CD4-positive, alpha-beta T cell (primary cell): ENCODE measurements at regions of chr5 and their contacts with region 1.

Region 1: GRCh38 chr5:87267574-87268125 is at the start of gene RASA1:
- DNase-seq: peak; percentile 43 to 89 (median 70)
- ATAC-seq: peak; percentile 61
- H3K4me3 ChIP-seq: peak within 1 kb of the TSS; percentile 72
- H3K4me3 Mint-ChIP-seq: peak within 1 kb of the TSS; percentile 93
- H3K27ac ChIP-seq: peak within 1 kb of the TSS; percentile 36 to 77
- H3K27ac Mint-ChIP-seq: peak within 1 kb of the TSS; percentile 83
- H3K4me1 ChIP-seq: peaks cover 28% of the 10 kb centered on the region
- H3K4me1 Mint-ChIP-seq: peaks cover 34% of the 10 kb centered on the region
- H3K27me3 ChIP-seq: no peaks in the 10 kb centered on the region
- H3K27me3 Mint-ChIP-seq: no peaks in the 10 kb centered on the region
- CTCF ChIP-seq: no peak
- total RNA-seq, gene RASA1: 15.1 to 15.4 TPM

Region 2: DNA sequence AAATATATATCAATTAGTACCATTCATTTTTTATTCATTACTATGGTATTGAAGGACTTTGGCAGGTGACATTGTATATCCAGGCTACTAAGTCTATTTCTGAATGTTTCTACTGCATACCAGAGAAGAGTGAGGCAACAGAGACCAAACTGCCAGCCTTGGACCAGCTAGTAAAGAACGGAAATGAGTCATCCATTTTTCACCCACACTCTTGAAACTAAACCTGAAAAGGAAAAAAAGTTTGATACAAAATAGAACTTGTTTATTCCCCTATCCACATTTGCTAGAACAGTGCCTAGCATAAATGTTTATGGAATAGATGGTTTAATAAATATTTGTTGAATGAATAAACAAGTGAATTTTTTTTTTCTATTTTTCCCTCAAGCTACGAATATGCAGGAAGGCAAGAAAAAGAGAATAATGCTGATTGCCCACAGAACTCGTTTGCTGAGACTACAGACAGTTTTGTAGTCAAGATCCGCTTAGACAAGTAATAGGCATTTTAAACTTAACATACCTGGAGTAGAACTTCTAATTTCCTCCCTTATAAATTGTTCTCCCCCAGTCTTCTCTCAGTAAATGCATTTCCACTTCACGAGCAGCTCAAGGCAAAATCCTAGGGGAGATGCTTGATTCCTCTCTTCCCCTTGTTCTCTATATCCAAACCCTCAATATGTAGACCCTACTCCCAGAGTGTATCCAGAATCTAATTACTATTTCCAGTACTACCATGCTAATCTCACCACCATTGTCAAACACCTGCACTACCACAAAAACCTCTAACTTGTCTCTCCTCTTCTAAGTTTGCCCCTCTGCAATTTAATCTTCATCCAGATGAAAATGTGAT is 146.1 kb before region 1 on chr5:
- CTCF ChIA-PET with region 1: no interaction called
- POLR2A ChIA-PET with region 1: interaction called, 3 read pairs
- intact Hi-C with region 1: loop called in 1 of 2 experiments (anchors 5 kb)
- DNase-seq: peak in 11 of 14 experiments; percentile 5 to 76 (median 23)
- ATAC-seq: peak; percentile 79
- H3K4me3 ChIP-seq: no peak overlapping the region
- H3K4me3 Mint-ChIP-seq: peak overlapping the region; percentile 55
- H3K27ac ChIP-seq: peak overlapping the region; percentile 11 to 54
- H3K27ac Mint-ChIP-seq: peak overlapping the region; percentile 60
- H3K4me1 ChIP-seq: peaks cover 22% of the 10 kb centered on the region
- H3K4me1 Mint-ChIP-seq: peaks cover 39% of the 10 kb centered on the region
- H3K27me3 ChIP-seq: no peaks in the 10 kb centered on the region
- H3K27me3 Mint-ChIP-seq: no peaks in the 10 kb centered on the region
- CTCF ChIP-seq: no peak

Region 3: DNA sequence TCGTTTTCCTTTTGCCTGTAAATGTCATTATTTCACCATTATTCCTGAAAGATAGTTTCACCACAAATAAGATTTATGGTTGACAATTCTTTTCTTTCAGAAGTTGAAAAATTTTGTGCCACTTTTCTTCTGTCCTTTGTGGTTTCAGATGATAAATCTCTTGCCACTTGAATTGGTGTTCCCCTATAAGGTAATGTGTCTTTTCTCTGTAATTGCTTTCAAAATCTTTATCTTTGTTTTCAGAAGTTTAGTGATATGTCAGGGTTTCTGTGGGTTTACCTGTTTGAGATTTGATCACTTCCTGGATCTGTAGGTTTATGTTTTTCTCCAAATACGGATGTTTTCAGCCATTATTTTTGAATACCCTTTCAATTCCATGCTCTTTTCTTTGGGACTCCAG is 14.6 kb after region 1 on chr5:
- CTCF ChIA-PET with region 1: interaction called, 5 read pairs
- POLR2A ChIA-PET with region 1: interaction called, 30 read pairs
- intact Hi-C with region 1: no loop called
- DNase-seq: peak in 3 of 14 experiments; percentile 52 to 65 (median 52)
- ATAC-seq: peak; percentile 89
- H3K4me3 ChIP-seq: peak overlapping the region; percentile 36
- H3K4me3 Mint-ChIP-seq: peak overlapping the region; percentile 89
- H3K27ac ChIP-seq: peak overlapping the region; percentile 39 to 65
- H3K27ac Mint-ChIP-seq: peak overlapping the region; percentile 95
- H3K4me1 ChIP-seq: peaks cover 8% of the 10 kb centered on the region
- H3K4me1 Mint-ChIP-seq: peaks cover 64% of the 10 kb centered on the region
- H3K27me3 ChIP-seq: no peaks in the 10 kb centered on the region
- H3K27me3 Mint-ChIP-seq: no peaks in the 10 kb centered on the region
- CTCF ChIP-seq: no peak

Region 4: DNA sequence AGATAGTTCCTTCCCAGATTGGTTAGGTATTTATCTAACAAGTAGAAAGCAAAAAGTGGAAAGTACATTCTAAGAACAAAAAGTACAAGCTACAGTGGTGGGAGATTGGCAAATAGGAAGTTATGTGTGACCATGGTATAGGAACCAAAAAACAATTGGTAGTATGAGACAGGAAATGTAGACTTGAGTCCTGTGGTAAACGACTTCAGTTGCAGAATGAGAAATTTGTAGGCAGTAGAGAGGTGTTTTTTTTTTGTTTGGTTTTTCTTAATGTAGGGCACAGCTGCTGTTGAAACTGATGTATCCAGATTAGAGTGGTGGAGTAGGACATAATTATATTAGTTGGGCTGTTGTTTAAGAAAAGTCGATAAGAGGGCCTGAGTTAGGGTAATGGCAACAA is 73.1 kb after region 1 on chr5:
- CTCF ChIA-PET with region 1: interaction called, 3 read pairs
- POLR2A ChIA-PET with region 1: interaction called, 8 read pairs
- intact Hi-C with region 1: loop called (anchors 2 to 5 kb)
- DNase-seq: peak in 3 of 14 experiments; percentile 59 to 78 (median 61)
- ATAC-seq: peak; percentile 90
- H3K4me3 ChIP-seq: peak overlapping the region; percentile 28
- H3K4me3 Mint-ChIP-seq: peak overlapping the region; percentile 79
- H3K27ac ChIP-seq: peak overlapping the region in 1 of 2 donors; percentile 51
- H3K27ac Mint-ChIP-seq: peak overlapping the region; percentile 84
- H3K4me1 ChIP-seq: no peaks in the 10 kb centered on the region
- H3K4me1 Mint-ChIP-seq: peaks cover 33% of the 10 kb centered on the region
- H3K27me3 ChIP-seq: no peaks in the 10 kb centered on the region
- H3K27me3 Mint-ChIP-seq: no peaks in the 10 kb centered on the region
- CTCF ChIP-seq: no peak

Region 5: DNA sequence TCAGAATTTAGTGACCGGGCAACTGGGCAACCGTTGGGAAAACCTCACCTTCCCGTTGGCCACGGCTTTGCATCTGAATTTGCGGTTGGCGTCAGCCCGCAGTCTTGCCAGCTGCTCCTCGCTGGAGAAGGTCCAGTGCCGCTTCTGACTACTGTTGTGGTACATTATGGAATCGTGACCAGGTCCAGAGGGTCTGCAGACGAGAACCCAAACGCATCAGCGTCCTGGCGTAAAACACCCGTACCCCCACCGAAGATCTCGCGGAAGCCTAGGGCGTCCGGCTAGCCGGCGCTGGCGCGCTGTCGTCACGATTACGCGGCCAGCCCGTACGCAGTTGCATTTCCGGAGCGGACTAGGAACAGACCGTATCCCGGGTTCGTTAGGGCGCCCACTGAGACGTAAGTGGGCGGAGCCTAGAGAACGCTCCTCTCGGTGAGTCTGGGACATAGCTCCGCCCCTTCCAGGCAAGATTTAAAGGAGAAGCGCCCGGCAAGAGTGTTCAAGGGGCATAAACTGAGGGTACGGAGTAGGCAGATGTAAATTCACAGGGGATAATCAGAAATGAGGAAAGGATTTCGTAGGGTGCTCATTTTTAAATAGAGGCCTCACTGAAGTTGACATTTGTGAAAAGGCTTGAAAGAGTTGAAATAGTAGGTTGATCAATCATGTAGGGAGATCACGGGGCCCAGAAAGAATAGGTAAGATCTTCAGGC is 145.1 kb after region 1 on chr5 and contains the start of gene CCNH:
- CTCF ChIA-PET with region 1: no interaction called
- POLR2A ChIA-PET with region 1: interaction called, 14 read pairs
- intact Hi-C with region 1: no loop called
- DNase-seq: peak; percentile 91 to 99 (median 95)
- ATAC-seq: peak; percentile 95
- H3K4me3 ChIP-seq: peak within 1 kb of the TSS; percentile 95
- H3K4me3 Mint-ChIP-seq: peak within 1 kb of the TSS; percentile 97
- H3K27ac ChIP-seq: peak within 1 kb of the TSS; percentile 90 to 98
- H3K27ac Mint-ChIP-seq: peak within 1 kb of the TSS; percentile 96
- H3K4me1 ChIP-seq: peaks cover 19% of the 10 kb centered on the region
- H3K4me1 Mint-ChIP-seq: peaks cover 50% of the 10 kb centered on the region
- H3K27me3 ChIP-seq: no peaks in the 10 kb centered on the region
- H3K27me3 Mint-ChIP-seq: no peaks in the 10 kb centered on the region
- CTCF ChIP-seq: no peak
- total RNA-seq, gene CCNH: 309 to 311 TPM